ENCODE measurements at regions of chr7 and their contacts with region 1.

Region 1: GRCh38 chr7:154927624-154928143 is 75.2 kb downstream of the PAXIP1 start:
- DNase-seq: peak; percentile 88
- ATAC-seq: peak; percentile 69
- H3K4me3 Mint-ChIP-seq: peak overlapping the region; percentile 96
- H3K27ac Mint-ChIP-seq: peak overlapping the region; percentile 92
- H3K4me1 Mint-ChIP-seq: peaks cover 25% of the 10 kb centered on the region
- H3K27me3 Mint-ChIP-seq: peaks cover 6% of the 10 kb centered on the region

Region 2: GRCh38 chr7:154652564-154652963 is 275.1 kb before region 1 on chr7:
- CTCF ChIA-PET with region 1: no interaction called
- POLR2A ChIA-PET with region 1: no interaction called
- DNase-seq: no peak
- ATAC-seq: no peak
- H3K4me3 Mint-ChIP-seq: no peak overlapping the region
- H3K27ac Mint-ChIP-seq: no peak overlapping the region
- H3K4me1 Mint-ChIP-seq: no peaks in the 10 kb centered on the region
- H3K27me3 Mint-ChIP-seq: no peaks in the 10 kb centered on the region

Region 3: DNA sequence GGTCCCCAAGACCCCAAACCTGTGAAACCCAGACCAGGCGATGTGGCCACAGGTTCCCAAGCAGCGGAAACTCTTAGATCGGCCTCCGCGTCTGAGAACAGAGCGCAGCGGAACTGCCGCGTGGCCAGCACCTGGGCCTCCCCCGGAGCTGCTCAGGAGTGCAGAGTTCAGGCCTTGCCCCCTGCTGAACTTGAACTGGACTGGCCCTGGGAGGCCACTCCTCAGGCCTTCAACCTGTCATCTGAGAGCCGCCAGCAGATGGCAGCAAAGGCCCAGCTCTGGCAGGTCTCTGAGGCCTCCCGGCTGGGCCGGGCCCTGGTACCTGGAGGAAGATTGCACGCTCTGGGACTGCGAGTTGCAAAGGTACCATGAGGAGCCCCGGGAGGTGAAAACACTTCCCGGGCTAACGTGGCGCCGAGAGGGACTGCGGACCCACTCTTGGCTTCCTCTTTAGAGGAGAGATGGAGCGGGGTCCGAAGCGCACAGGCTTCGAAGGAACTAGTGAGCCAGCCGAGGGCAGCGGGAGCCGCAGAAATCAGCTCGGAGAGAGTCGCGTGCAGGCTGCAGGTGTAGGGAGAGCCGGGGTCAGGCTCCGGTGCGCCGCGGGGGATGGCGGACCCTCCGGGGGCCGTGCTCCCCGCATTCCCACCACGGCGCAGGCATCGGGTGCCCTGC is 13.9 kb before region 1 on chr7:
- CTCF ChIA-PET with region 1: interaction called, 43 read pairs
- POLR2A ChIA-PET with region 1: no interaction called
- DNase-seq: peak; percentile 88
- ATAC-seq: peak; percentile 99
- H3K4me3 Mint-ChIP-seq: peak overlapping the region; percentile 55
- H3K27ac Mint-ChIP-seq: no peak overlapping the region
- H3K4me1 Mint-ChIP-seq: peaks cover 4% of the 10 kb centered on the region
- H3K27me3 Mint-ChIP-seq: peaks cover 8% of the 10 kb centered on the region

Region 4: DNA sequence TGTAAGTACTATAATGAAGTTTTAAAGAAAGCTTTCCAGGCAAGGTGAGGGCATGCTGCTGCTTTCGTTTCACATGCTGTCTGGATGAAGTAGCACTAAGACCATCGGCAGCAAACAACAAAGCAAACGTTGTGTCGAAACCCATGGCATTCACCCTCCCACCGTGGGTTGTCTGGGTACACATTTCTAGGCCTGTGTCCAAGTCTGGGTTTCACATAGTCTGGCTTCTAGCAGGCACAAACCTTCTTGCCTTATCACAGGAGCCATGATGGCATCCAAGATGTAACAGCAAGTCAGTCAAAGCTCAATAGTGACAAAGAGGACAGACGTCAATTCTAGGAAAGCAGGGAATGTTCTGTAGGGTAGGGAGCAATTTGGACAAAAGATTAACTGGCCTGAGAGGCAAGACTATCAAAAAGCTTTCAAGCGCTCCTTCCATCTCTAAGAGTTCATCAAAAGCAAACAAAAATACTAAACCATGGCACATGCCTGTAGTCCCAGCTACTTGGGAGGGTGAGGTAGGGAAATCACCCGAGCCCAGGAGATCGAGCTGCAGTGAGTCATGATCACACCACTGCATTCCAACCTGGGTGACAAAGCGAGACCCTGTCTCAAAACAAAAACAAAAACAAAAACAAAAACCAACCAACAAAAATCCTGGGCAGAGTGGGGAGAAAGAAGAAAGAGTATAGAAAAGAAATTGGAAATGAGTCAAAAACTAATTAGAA is 32.5 kb after region 1 on chr7:
- CTCF ChIA-PET with region 1: interaction called, 12 read pairs
- POLR2A ChIA-PET with region 1: no interaction called
- DNase-seq: no peak
- ATAC-seq: no peak
- H3K4me3 Mint-ChIP-seq: no peak overlapping the region
- H3K27ac Mint-ChIP-seq: no peak overlapping the region
- H3K4me1 Mint-ChIP-seq: no peaks in the 10 kb centered on the region
- H3K27me3 Mint-ChIP-seq: no peaks in the 10 kb centered on the region

Region 5: DNA sequence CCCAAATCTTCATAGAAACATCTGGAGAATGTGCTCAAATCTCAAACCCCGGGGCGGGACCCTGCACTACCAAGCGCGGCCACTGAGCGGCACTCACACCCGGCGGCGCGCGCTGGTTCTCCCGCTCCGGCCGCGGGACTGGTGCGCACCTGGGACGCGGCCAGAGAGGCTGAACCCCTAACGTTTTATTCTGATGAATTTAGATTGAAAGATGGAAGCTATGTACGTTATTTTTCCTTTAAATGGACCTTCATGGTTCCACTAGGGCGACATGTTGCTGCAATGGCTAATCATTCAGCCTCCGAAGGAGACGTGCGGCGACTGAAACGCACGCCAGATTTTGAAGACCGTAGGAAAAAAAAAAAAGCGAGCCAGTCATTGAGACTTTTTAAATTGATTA is 263.0 kb after region 1 on chr7:
- CTCF ChIA-PET with region 1: interaction called, 11 read pairs
- POLR2A ChIA-PET with region 1: no interaction called
- DNase-seq: peak; percentile 66
- ATAC-seq: peak; percentile 64
- H3K4me3 Mint-ChIP-seq: no peak overlapping the region
- H3K27ac Mint-ChIP-seq: no peak overlapping the region
- H3K4me1 Mint-ChIP-seq: peaks cover 21% of the 10 kb centered on the region
- H3K27me3 Mint-ChIP-seq: no peaks in the 10 kb centered on the region

Region 6: DNA sequence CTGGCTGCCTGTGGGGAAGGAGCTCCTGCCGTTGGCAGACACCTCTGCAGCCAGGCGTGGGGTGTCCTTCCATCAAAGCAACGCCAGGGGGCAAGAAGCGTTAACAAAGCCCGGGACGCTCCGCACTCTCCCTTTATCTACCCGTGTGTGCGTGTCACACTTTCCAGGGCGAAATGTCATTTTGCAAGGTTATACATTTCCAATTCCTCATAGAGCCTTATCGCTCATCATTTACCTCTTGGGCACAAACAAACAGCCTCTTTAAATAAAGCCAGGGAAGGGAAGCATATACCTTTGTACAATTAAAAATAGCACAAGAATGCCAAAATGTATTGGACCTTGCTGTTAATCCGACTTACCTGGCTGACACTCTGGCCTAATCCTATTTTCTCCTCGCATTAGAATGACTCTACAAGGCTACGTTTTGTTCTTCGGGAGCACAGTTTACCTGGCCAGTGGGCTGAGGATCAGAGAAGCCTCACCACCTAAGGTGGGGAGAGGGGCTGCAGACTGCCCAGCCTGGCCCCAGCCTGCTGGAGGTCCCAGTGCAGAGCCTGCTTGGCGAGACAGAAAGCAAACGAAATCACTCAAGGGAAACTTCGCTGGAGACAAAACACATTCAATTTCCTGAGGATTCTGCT is 452.7 kb after region 1 on chr7:
- CTCF ChIA-PET with region 1: interaction called, 15 read pairs
- POLR2A ChIA-PET with region 1: no interaction called
- DNase-seq: peak; percentile 80
- ATAC-seq: peak; percentile 87
- H3K4me3 Mint-ChIP-seq: no peak overlapping the region
- H3K27ac Mint-ChIP-seq: no peak overlapping the region
- H3K4me1 Mint-ChIP-seq: peaks cover 30% of the 10 kb centered on the region
- H3K27me3 Mint-ChIP-seq: peaks cover 80% of the 10 kb centered on the region

Region 7: GRCh38 chr7:155769701-155770100 is 842.0 kb after region 1 on chr7:
- CTCF ChIA-PET with region 1: interaction called, 11 read pairs
- POLR2A ChIA-PET with region 1: no interaction called
- DNase-seq: no peak
- ATAC-seq: no peak
- H3K4me3 Mint-ChIP-seq: no peak overlapping the region
- H3K27ac Mint-ChIP-seq: no peak overlapping the region
- H3K4me1 Mint-ChIP-seq: peaks cover 29% of the 10 kb centered on the region
- H3K27me3 Mint-ChIP-seq: no peaks in the 10 kb centered on the region